Activated B cell treated with CpG ODN at 0.5 μM for 24 hours (primary cell): ENCODE measurements at regions of chr7 and their contacts with region 1.

Region 1: GRCh38 chr7:3649250-3649649 is 348.2 kb downstream of the SDK1 start:
- DNase-seq: no peak
- ATAC-seq: no peak
- H3K4me3 Mint-ChIP-seq: no peak overlapping the region
- H3K27ac Mint-ChIP-seq: no peak overlapping the region
- H3K4me1 Mint-ChIP-seq: no peaks in the 10 kb centered on the region
- H3K27me3 Mint-ChIP-seq: no peaks in the 10 kb centered on the region
- CTCF ChIP-seq: no peak

Region 2: GRCh38 chr7:3482147-3482964 is 166.9 kb before region 1 on chr7:
- CTCF ChIA-PET with region 1: interaction called, 3 read pairs
- POLR2A ChIA-PET with region 1: no interaction called
- intact Hi-C with region 1: loop called (anchors 1 kb)
- DNase-seq: no peak
- ATAC-seq: no peak
- H3K4me3 Mint-ChIP-seq: no peak overlapping the region
- H3K27ac Mint-ChIP-seq: no peak overlapping the region
- H3K4me1 Mint-ChIP-seq: peaks cover 4% of the 10 kb centered on the region
- H3K27me3 Mint-ChIP-seq: peaks cover 10% of the 10 kb centered on the region
- CTCF ChIP-seq: no peak

Region 3: GRCh38 chr7:3636131-3636860 is 13.0 kb before region 1 on chr7:
- CTCF ChIA-PET with region 1: no interaction called
- POLR2A ChIA-PET with region 1: no interaction called
- intact Hi-C with region 1: no loop called
- DNase-seq: no peak
- ATAC-seq: no peak
- H3K4me3 Mint-ChIP-seq: no peak overlapping the region
- H3K27ac Mint-ChIP-seq: no peak overlapping the region
- H3K4me1 Mint-ChIP-seq: no peaks in the 10 kb centered on the region
- H3K27me3 Mint-ChIP-seq: peaks cover 7% of the 10 kb centered on the region
- CTCF ChIP-seq: no peak

Region 4: DNA sequence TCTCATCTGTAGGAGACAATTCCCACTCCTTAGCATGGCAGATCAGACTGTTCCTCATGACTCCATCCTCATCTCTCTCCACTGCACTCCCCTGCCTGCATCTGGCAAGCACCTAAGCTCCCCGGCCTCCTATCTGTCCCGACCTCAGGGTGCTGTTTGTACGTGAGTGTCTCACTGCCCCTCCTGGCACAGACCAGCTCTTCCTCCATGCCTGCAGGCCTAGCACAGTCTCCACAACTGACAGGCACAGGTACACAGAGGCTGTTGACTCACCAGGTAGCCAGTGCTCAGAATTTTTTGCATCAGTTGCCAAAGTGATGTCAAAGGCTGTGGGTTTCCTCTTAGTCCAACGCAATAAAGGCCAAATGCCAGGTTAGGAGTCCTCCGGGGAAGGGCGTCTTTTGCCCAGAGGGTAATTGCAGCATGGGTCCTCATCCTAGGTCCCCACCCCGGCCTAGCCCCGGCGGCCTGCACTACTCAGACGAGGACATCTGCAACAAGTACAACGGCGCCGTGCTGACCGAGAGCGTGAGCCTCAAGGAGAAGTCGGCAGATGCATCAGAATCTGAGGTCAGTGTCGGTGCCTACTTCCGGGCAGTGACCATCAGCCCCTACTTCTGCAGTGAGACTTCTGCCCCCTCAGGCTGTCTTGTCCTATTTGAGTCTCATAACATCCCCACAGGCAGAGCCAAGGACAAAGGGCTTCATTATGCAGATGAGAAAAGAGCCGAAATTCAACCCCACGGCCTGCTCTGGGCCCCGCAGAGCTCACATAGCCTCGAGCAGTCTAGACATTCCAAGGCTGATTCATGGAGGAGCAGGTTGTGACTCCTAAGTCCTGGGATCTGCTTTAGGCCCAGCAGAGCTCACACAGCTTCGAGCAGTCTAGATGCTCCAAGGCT is 596.2 kb after region 1 on chr7:
- CTCF ChIA-PET with region 1: no interaction called
- POLR2A ChIA-PET with region 1: no interaction called
- intact Hi-C with region 1: no loop called
- DNase-seq: no peak
- ATAC-seq: no peak
- H3K4me3 Mint-ChIP-seq: no peak overlapping the region
- H3K27ac Mint-ChIP-seq: no peak overlapping the region
- H3K4me1 Mint-ChIP-seq: no peaks in the 10 kb centered on the region
- H3K27me3 Mint-ChIP-seq: no peaks in the 10 kb centered on the region
- CTCF ChIP-seq: no peak